GM10248 (cell line): ENCODE measurements at regions of chr9 and their contacts with region 1.

Region 1: DNA sequence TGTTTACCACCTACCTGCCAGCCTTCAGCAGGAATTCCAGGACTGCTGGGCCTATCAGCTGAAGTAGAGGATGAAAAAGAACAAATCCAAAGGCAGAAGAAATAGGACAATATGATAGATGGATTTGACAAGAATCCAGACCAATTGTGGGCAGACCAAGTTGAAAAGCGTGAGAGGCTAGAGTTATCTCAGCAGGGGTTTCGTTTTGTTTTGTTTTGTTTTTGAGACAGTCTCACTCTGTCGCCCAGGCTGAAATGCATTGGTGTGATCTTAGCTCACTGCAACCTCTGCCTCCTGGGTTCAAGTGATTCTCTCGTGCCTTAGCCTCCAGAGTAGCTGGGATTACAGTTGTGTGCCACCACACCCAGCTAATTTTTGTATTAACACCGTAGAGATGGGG is 113.2 kb downstream of the PALM2AKAP2 start:
- DNase-seq: no peak
- CTCF ChIP-seq: no peak

Region 2: GRCh38 chr9:109880277-109881169 is 12.7 kb before region 1 on chr9:
- CTCF ChIA-PET with region 1: interaction called, 25 read pairs
- POLR2A ChIA-PET with region 1: no interaction called
- DNase-seq: peak; percentile 56
- CTCF ChIP-seq: peak; percentile 57